Endothelial cell of umbilical vein (primary cell): ENCODE measurements at regions of chr1 and their contacts with region 1.

Region 1: GRCh38 chr1:218660678-218661053 is 315.5 kb downstream of the TGFB2 start:
- DNase-seq: peak; percentile 91
- H3K4me3 ChIP-seq: no peak overlapping the region
- H3K27ac ChIP-seq: peak overlapping the region; percentile 64
- H3K4me1 ChIP-seq: peaks cover 26% of the 10 kb centered on the region
- H3K27me3 ChIP-seq: no peaks in the 10 kb centered on the region
- CTCF ChIP-seq: no peak
- POLR2A ChIP-seq: no peak

Region 2: DNA sequence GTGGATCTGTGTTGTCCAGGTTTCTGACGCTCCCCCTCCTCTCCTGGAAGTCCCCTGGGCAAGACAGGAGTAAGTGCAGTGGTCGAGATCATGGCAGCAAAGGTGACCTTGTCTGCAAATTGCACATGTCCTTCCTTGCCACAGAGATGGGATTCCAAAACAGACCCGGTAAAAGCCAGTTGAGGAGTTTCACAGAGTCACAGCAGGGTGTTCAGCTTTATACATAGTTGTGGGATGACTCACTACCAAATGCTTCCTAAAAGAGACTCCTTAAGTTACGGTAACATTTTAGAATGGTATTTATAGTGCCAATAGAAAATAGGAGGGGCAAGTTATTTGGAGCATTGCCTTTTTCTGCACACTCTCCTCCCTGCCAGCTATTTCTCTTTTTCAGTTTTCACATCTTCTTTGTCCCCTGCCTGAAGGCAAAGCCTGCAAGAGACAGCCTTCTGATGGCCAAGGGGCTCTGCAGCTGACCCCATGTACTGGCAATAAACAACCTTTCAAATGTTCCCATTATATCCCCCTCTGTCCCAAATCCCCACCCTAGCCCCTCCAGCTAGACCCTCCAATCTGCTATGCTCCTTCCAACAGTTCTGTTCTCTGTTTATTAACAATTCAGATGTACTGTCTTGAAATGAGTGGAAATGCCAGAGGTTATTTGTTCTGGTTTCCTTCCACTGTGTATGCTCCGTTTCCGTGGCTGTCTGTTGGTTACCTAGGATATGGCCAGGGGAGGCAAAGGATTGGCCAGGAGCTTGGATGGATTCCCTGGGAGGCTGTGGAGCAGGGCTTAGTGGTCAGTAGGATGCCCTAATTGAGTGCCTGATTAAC is 200.6 kb before region 1 on chr1:
- CTCF ChIA-PET with region 1: no interaction called
- POLR2A ChIA-PET with region 1: no interaction called
- dilution Hi-C with region 1: no loop called
- intact Hi-C with region 1: no loop called
- DNase-seq: peak; percentile 82
- H3K4me3 ChIP-seq: peak overlapping the region in 1 of 3 experiments; percentile 44
- H3K27ac ChIP-seq: peak overlapping the region; percentile 98
- H3K4me1 ChIP-seq: peaks cover 44% of the 10 kb centered on the region
- H3K27me3 ChIP-seq: no peaks in the 10 kb centered on the region
- CTCF ChIP-seq: no peak
- POLR2A ChIP-seq: no peak

Region 3: GRCh38 chr1:218674280-218674773 is 13.7 kb after region 1 on chr1:
- CTCF ChIA-PET with region 1: interaction called, 3 read pairs
- POLR2A ChIA-PET with region 1: no interaction called
- dilution Hi-C with region 1: no loop called
- intact Hi-C with region 1: loop called (anchors 2 kb)
- DNase-seq: peak; percentile 69
- H3K4me3 ChIP-seq: no peak overlapping the region
- H3K27ac ChIP-seq: peak overlapping the region; percentile 23
- H3K4me1 ChIP-seq: peaks cover 7% of the 10 kb centered on the region
- H3K27me3 ChIP-seq: no peaks in the 10 kb centered on the region
- CTCF ChIP-seq: peak in 1 of 2 donors; percentile 33
- POLR2A ChIP-seq: peak; percentile 23